HEK293 (cell line): ENCODE measurements at regions of chr17 and their contacts with region 1.

Region 1: DNA sequence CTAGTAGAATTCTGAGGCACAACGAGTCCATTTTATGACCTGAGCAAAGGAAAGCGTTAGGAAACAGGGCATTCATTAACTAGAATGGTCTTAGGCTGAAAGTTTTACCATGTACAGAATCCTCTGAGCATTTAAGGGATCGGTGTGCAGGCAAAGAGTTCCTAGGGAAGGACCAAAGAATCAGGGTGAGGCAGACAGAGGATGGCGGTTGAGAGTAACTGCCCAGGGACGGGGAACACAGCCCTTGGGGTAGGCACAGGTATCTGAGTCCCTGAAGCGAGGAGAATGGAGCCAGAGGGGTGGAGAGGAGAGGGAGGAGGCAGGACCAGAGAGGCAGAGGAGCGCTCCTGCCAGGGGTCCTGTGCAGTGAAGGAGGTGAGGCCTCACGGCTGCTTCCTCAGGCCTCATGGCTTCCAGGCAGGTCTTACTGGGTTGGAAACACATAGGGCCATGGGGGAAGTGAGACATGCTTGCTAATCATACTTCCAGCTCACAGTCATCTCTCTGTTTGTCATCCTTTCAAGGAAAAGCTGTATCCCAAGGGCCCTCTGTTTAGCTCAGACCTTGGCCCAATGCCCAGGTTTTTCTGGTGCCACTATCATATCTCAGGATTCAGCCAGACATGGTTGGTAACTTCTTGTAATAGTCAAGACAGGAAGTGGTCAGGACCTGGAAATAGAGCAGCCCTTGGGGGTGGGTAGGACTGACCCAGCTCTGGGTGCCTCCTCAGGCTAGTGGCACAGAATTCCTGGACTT is 13.8 kb upstream of the ITGB3 start:
- H3K4me3 ChIP-seq: no peak overlapping the region
- H3K27ac ChIP-seq: peak overlapping the region; percentile 58
- H3K4me1 ChIP-seq: peaks cover 11% of the 10 kb centered on the region
- CTCF ChIP-seq: no peak

Region 2: GRCh38 chr17:47229535-47230443 is 10.0 kb before region 1 on chr17:
- CTCF ChIA-PET with region 1: interaction called, 31 read pairs
- POLR2A ChIA-PET with region 1: interaction called, 4 read pairs
- H3K4me3 ChIP-seq: no peak overlapping the region
- H3K27ac ChIP-seq: no peak overlapping the region; the same call in 1 of the 2 replicates
- H3K4me1 ChIP-seq: peaks cover 2% of the 10 kb centered on the region; the same call in 1 of the 2 replicates
- CTCF ChIP-seq: peak; percentile 80